Adrenal gland (tissue), 19 donors: ENCODE measurements at regions of chr1 and their contacts with region 1.

Region 1: DNA sequence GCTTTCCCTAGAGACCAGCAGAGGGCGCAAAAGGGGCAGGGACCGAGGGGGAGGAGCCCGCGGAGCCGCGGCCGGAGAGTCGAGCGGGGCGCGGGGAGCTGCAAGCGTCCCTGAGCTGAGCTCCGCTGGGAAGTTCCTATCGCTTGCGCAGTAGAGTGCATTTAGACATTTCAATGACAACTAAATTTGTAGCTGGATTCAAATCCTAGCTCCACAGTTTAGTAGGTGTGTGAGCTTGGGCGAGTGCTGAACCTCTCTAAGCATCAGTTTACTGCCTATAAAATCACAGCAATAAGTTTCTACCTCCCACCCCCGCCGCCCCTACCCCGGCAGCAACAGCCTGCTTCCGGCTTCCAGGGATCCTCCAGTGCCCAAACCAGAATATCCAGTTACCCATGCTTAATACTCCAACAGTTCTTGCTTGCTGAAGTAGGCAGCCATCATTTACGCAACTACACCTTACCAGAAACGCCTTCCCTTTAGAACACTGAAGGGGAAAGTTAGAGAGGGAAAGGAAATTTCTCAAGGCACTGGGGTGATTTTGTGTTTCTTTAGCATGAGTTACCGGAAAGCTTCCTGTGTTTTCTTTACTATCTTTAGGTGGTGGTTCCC is 9.1 kb downstream of the TLR5 start:
- DNase-seq: peak; percentile 85 to 91 (median 87)
- H3K4me3 ChIP-seq: peak overlapping the region in 1 of 4 donors; percentile 39
- H3K27ac ChIP-seq: peak overlapping the region in 2 of 5 donors; percentile 66 to 75
- H3K4me1 ChIP-seq: peaks cover 19 to 34% of the 10 kb centered on the region in 2 donors
- H3K27me3 ChIP-seq: no peaks in the 10 kb centered on the region
- CTCF ChIP-seq: peak; percentile 87 to 98 (median 92)
- POLR2A ChIP-seq: no peak

Region 2: GRCh38 chr1:222987674-222988076 is 146.3 kb before region 1 on chr1:
- intact Hi-C with region 1: no loop called
- DNase-seq: no peak
- H3K4me3 ChIP-seq: no peak overlapping the region
- H3K27ac ChIP-seq: no peak overlapping the region
- H3K4me1 ChIP-seq: peaks cover 8 to 21% of the 10 kb centered on the region in 2 donors
- H3K27me3 ChIP-seq: no peaks in the 10 kb centered on the region
- CTCF ChIP-seq: no peak
- POLR2A ChIP-seq: no peak

Region 3: GRCh38 chr1:223074445-223075300 is 59.3 kb before region 1 on chr1:
- intact Hi-C with region 1: no loop called
- DNase-seq: no peak
- H3K4me3 ChIP-seq: no peak overlapping the region
- H3K27ac ChIP-seq: no peak overlapping the region
- H3K4me1 ChIP-seq: no peaks in the 10 kb centered on the region
- H3K27me3 ChIP-seq: no peaks in the 10 kb centered on the region
- CTCF ChIP-seq: no peak
- POLR2A ChIP-seq: no peak

Region 4: GRCh38 chr1:223091896-223092295 is 42.0 kb before region 1 on chr1:
- intact Hi-C with region 1: loop called in 1 of 2 experiments (anchors 5 kb)
- DNase-seq: no peak
- H3K4me3 ChIP-seq: no peak overlapping the region
- H3K27ac ChIP-seq: no peak overlapping the region
- H3K4me1 ChIP-seq: no peaks in the 10 kb centered on the region
- H3K27me3 ChIP-seq: no peaks in the 10 kb centered on the region
- CTCF ChIP-seq: no peak
- POLR2A ChIP-seq: no peak

Region 5: DNA sequence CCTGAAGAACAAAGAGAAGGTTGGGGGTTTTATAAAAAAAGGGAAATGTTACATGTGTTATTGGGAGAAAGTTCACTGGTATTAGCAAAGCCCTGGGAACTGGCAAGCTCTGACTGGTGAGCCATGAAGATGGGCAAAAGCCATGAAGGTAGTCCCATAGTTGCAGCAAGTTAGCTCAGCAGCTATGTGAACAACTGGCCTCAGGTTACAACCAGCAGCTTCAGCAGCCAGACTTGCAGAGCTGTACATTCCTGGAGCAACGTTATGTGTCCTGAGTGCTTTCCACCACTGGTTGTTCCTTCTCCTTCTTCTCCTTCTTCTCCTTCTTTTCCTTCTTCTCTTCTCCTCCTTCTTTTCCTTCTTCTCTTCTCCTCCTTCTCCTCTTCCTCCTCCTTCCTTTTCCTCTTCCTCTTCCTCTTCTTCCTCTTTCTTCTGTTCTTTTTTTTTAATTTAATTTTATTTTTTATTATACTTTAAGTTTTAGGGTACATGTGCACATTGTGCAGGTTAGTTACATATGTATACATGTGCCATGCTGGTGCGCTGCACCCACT is 65.2 kb after region 1 on chr1:
- intact Hi-C with region 1: no loop called
- DNase-seq: no peak
- H3K4me3 ChIP-seq: no peak overlapping the region
- H3K27ac ChIP-seq: no peak overlapping the region
- H3K4me1 ChIP-seq: no peaks in the 10 kb centered on the region
- H3K27me3 ChIP-seq: no peaks in the 10 kb centered on the region
- CTCF ChIP-seq: no peak
- POLR2A ChIP-seq: no peak

Region 6: GRCh38 chr1:223683586-223684487 is 549.9 kb after region 1 on chr1:
- intact Hi-C with region 1: loop called in 1 of 2 experiments (anchors 10 kb)
- DNase-seq: peak; percentile 51 to 88 (median 66)
- H3K4me3 ChIP-seq: no peak overlapping the region
- H3K27ac ChIP-seq: no peak overlapping the region
- H3K4me1 ChIP-seq: no peaks in the 10 kb centered on the region
- H3K27me3 ChIP-seq: no peaks in the 10 kb centered on the region
- CTCF ChIP-seq: peak; percentile 33 to 75 (median 66)
- POLR2A ChIP-seq: no peak